ENCODE measurements at regions of chr6 and their contacts with region 1.

Region 1: GRCh38 chr6:113858480-113859348 is 1.6 kb downstream of the MARCKS start:
- DNase-seq: peak; percentile 98
- ATAC-seq: peak; percentile 76
- H3K4me3 Mint-ChIP-seq: no peak overlapping the region
- H3K27ac Mint-ChIP-seq: peak overlapping the region; percentile 85
- H3K4me1 Mint-ChIP-seq: peaks cover 23% of the 10 kb centered on the region
- H3K27me3 Mint-ChIP-seq: no peaks in the 10 kb centered on the region
- CTCF ChIP-seq: peak; percentile 88

Region 2: DNA sequence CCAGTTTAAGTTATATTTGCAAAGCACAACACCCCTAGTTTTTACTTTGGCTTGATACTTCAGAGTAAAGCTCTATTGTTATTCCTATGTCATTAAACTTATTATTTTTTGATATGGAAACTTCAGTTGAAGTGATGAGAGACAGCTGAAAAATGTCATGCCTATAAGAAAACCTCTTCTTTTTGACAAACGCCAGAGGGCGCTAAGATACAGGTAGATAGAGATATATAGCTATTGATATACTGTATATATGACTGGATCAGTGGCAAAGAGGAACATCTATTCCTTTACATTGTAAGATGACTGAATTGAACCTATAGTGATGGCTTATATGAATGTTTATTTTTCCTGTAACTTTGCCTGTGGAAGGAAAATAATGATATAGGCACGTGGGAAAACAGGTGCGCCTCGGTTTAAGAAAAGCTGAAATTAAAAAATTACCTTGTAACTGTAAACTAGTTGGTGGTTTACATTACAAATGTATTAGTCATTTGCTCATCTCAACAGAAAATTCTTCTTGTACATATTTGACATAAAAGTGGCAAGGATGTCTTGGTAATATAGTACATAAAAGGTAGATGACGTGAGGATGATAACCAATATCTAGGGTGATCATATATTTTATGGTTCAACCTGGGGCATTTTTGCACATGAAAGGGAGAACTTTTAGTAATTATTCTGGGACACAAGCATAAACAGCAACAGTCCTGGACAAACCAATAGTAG is 1678.5 kb before region 1 on chr6:
- CTCF ChIA-PET with region 1: interaction called, 13 read pairs
- POLR2A ChIA-PET with region 1: interaction called, 3 read pairs
- intact Hi-C with region 1: no loop called
- DNase-seq: no peak
- ATAC-seq: peak; percentile 57
- H3K4me3 Mint-ChIP-seq: no peak overlapping the region
- H3K27ac Mint-ChIP-seq: no peak overlapping the region
- H3K4me1 Mint-ChIP-seq: no peaks in the 10 kb centered on the region
- H3K27me3 Mint-ChIP-seq: peaks cover 12% of the 10 kb centered on the region
- CTCF ChIP-seq: no peak

Region 3: GRCh38 chr6:113306552-113307145 is 552.1 kb before region 1 on chr6:
- CTCF ChIA-PET with region 1: interaction called, 83 read pairs
- POLR2A ChIA-PET with region 1: interaction called, 28 read pairs
- intact Hi-C with region 1: loop called (anchors 1 kb)
- DNase-seq: peak; percentile 51
- ATAC-seq: peak; percentile 97
- H3K4me3 Mint-ChIP-seq: no peak overlapping the region
- H3K27ac Mint-ChIP-seq: no peak overlapping the region
- H3K4me1 Mint-ChIP-seq: peaks cover 6% of the 10 kb centered on the region
- H3K27me3 Mint-ChIP-seq: no peaks in the 10 kb centered on the region
- CTCF ChIP-seq: peak; percentile 31

Region 4: DNA sequence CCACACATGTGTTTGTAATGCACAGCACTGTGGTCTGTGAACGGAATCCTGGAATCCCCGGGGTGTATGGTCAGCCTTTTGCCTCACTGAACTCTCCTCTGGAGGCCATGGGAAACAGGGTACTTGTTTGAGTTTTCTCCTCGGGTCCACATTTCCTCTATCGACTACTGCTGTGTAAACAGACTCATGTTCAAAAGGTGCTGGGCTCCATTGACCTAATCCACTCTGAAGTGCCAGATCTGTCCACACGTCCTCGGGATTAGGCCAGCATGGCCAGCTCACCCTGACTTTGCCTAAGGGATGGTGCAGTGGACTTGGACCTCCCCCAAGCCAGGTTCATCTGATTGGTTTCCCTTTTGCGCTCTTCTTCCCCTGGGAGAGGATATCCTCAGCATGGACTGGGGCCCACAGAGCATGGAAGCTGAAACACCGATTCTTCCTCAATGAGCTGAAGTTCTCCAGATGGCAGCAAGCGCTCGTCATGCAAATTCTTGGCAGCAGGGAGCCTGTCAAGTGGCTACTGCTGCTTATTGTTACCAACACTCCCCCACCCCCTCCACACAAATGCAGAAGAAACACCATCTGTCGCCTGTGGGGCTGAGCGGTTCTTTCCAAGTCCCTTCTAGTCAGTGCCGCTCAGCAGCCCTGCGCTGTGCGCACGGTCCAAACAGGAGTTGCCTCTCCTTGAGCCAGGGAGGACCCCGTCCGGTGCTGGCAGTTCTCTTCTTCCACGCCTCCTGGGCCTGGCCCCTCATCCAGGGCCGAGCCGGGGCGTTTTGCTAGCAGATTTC is 294.1 kb before region 1 on chr6:
- CTCF ChIA-PET with region 1: no interaction called
- POLR2A ChIA-PET with region 1: no interaction called
- intact Hi-C with region 1: loop called (anchors 5 kb)
- DNase-seq: peak; percentile 30
- ATAC-seq: peak; percentile 91
- H3K4me3 Mint-ChIP-seq: peak overlapping the region; percentile 64
- H3K27ac Mint-ChIP-seq: no peak overlapping the region
- H3K4me1 Mint-ChIP-seq: peaks cover 20% of the 10 kb centered on the region
- H3K27me3 Mint-ChIP-seq: no peaks in the 10 kb centered on the region
- CTCF ChIP-seq: no peak

Region 5: GRCh38 chr6:113690281-113691259 is 168.1 kb before region 1 on chr6:
- CTCF ChIA-PET with region 1: interaction called, 5 read pairs
- POLR2A ChIA-PET with region 1: interaction called, 8 read pairs
- intact Hi-C with region 1: loop called (anchors 1 kb)
- DNase-seq: no peak
- ATAC-seq: peak; percentile 71
- H3K4me3 Mint-ChIP-seq: peak overlapping the region; percentile 19
- H3K27ac Mint-ChIP-seq: peak overlapping the region; percentile 46
- H3K4me1 Mint-ChIP-seq: peaks cover 23% of the 10 kb centered on the region
- H3K27me3 Mint-ChIP-seq: no peaks in the 10 kb centered on the region
- CTCF ChIP-seq: no peak

Region 6: DNA sequence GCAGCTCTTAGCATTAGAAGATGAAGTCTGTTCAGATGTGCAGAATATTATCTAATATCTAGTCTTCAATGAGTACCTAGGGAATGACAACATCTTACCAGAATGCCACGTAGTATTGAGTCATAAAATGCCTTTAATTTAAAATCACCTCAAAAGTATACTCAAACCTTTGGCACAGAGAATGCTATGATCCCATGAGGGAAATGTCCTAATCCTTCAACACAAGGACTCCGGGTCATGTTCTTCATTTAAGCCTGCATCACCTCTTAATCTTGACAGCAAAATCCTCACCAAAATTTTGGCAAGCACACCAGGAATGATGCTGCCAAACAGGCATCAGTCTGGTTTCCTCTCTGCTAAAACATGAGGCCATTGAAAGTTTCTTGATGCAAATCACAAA is 25.2 kb before region 1 on chr6:
- CTCF ChIA-PET with region 1: no interaction called
- POLR2A ChIA-PET with region 1: no interaction called
- intact Hi-C with region 1: no loop called
- DNase-seq: no peak
- ATAC-seq: no peak
- H3K4me3 Mint-ChIP-seq: no peak overlapping the region
- H3K27ac Mint-ChIP-seq: no peak overlapping the region
- H3K4me1 Mint-ChIP-seq: no peaks in the 10 kb centered on the region
- H3K27me3 Mint-ChIP-seq: no peaks in the 10 kb centered on the region
- CTCF ChIP-seq: no peak

Region 7: DNA sequence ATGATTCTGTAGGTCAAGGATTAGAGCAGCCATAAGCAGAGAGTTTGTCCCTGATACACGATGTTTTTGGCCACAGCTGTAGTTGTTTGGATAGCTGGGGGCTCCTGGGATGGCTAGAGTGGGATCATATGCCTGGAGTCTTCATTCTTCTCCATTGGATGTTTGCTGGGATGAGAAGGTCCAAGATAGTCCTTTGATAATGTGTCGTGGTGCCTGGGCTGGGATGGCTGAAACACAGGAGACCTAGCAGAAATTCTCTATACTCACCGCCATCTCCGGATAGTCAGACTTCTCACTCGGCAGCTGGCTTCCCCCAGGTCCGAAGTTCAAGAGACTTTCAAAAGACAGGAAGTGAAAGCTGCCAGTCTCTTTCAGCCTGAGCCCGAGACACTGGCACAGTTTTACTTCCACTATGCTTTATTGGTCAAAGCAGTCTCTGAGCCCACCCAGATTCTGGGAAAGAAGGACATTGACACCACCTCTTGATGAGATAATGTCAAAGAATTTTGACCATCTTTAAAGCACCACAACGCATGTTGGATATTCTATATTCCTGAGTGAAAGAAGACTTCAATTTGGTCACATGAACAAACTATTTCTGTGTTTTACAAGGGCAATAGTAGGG is 14.4 kb after region 1 on chr6:
- CTCF ChIA-PET with region 1: interaction called, 20 read pairs
- POLR2A ChIA-PET with region 1: interaction called, 18 read pairs
- intact Hi-C with region 1: no loop called
- DNase-seq: peak; percentile 30
- ATAC-seq: peak; percentile 97
- H3K4me3 Mint-ChIP-seq: peak overlapping the region; percentile 82
- H3K27ac Mint-ChIP-seq: peak overlapping the region; percentile 43
- H3K4me1 Mint-ChIP-seq: peaks cover 9% of the 10 kb centered on the region
- H3K27me3 Mint-ChIP-seq: no peaks in the 10 kb centered on the region
- CTCF ChIP-seq: no peak

Region 8: GRCh38 chr6:113901482-113901881 is 42.8 kb after region 1 on chr6:
- CTCF ChIA-PET with region 1: no interaction called
- POLR2A ChIA-PET with region 1: no interaction called
- intact Hi-C with region 1: no loop called
- DNase-seq: no peak
- ATAC-seq: no peak
- H3K4me3 Mint-ChIP-seq: no peak overlapping the region
- H3K27ac Mint-ChIP-seq: no peak overlapping the region
- H3K4me1 Mint-ChIP-seq: no peaks in the 10 kb centered on the region
- H3K27me3 Mint-ChIP-seq: no peaks in the 10 kb centered on the region
- CTCF ChIP-seq: no peak